RWPE1 (cell line): ENCODE measurements at regions of chr11 and their contacts with region 1.

Region 1: GRCh38 chr11:102603091-102603490 is 22.0 kb downstream of the MMP20 start:
- DNase-seq: no peak
- H3K27ac ChIP-seq: no peak overlapping the region
- CTCF ChIP-seq: no peak

Region 2: DNA sequence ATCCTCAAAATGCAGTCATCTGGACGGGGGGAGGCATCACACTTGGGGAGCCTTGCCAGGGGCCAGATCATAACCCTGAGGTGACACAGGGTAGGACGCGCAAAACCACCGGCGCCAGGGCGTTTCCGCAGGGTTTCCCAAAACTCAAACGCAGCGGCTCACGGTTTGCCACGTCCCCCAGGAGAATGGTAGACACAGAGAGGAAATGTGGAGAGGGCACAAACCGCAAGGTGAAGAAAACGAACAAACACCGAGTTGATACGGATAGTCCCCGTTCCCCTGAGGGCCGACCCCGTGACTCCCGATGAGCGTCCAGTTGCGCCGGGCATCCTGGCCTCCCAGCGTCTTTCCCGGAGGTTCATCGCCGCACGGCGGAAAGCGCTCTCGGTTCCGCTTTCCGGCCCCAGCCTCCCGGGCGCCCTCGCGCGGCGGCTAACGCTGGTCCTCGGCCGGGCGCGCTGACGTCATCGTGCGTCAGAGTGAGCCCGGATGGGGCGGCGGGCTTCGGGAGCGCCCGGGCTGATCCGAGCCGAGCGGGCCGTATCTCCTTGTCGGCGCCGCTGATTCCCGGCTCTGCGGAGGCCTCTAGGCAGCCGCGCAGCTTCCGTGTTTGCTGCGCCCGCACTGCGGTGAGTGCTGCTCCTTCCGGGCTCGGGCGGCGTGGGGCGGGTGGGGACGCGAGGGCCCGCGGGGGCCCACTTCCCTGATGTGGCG is 256.2 kb before region 1 on chr11 and contains the start of gene BIRC2:
- CTCF ChIA-PET with region 1: no interaction called
- POLR2A ChIA-PET with region 1: interaction called, 18 read pairs
- DNase-seq: peak; percentile 85
- H3K27ac ChIP-seq: peak within 1 kb of the TSS; percentile 98
- CTCF ChIP-seq: peak; percentile 84

Region 3: GRCh38 chr11:102476812-102477211 is 126.3 kb before region 1 on chr11:
- CTCF ChIA-PET with region 1: no interaction called
- POLR2A ChIA-PET with region 1: no interaction called
- DNase-seq: no peak
- H3K27ac ChIP-seq: no peak overlapping the region
- CTCF ChIP-seq: no peak